CD8-positive, alpha-beta T cell (primary cell): ENCODE measurements at regions of chr15 and their contacts with region 1.

Region 1: DNA sequence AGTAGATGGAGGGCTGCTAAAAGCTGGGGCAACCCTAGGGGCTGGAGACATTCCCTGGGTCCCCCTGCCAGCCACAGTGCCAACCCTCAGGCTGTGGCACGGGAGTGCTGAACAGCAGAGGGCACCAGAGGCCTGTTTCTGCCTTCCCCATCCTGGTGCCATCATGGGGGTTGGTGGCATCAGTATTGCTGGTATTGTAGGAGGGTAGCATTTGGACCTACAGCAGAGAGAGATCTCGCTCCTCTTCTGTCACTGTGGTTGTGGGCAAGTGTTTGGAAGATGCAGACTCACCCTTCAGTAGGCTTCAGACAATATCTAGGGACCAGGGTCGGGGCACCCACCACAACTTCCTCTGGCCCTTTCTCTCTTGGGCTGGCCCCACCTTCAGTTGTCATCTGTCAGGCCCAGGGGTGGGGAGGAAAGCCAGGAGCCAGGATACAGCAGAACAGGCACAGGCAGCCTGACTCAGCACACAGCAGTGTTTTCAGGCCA is 123.5 kb downstream of the RPLP1 start:
- DNase-seq: peak; percentile 57 to 86 (median 70)
- ATAC-seq: peak; percentile 82
- H3K4me3 ChIP-seq: no peak overlapping the region
- H3K4me3 Mint-ChIP-seq: no peak overlapping the region
- H3K27ac ChIP-seq: no peak overlapping the region
- H3K27ac Mint-ChIP-seq: no peak overlapping the region
- H3K4me1 ChIP-seq: peaks cover 11% of the 10 kb centered on the region
- H3K4me1 Mint-ChIP-seq: peaks cover 21% of the 10 kb centered on the region
- H3K27me3 ChIP-seq: no peaks in the 10 kb centered on the region
- H3K27me3 Mint-ChIP-seq: no peaks in the 10 kb centered on the region
- CTCF ChIP-seq: peak; percentile 80

Region 2: DNA sequence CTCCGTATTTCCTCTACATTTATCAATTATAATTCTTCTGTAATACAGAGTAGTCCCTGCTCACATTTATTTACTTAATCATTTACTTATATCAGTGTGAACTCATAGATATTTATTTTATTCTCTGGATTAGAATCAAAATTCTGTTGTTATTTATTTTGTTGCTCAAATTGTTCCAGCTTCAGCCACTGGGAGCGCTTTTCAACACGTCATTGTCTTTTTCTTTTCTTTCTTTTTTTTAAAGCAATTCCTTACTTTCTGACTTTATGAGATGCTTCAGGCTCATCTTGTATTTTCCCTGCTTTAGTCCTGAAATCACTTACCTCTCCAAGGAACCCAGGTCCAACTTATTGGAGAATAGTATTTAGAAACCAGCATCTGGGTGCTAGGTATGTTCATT is 362.3 kb before region 1 on chr15:
- CTCF ChIA-PET with region 1: no interaction called
- POLR2A ChIA-PET with region 1: no interaction called
- intact Hi-C with region 1: no loop called
- DNase-seq: no peak
- ATAC-seq: no peak
- H3K4me3 ChIP-seq: no peak overlapping the region
- H3K4me3 Mint-ChIP-seq: no peak overlapping the region
- H3K27ac ChIP-seq: no peak overlapping the region
- H3K27ac Mint-ChIP-seq: no peak overlapping the region
- H3K4me1 ChIP-seq: no peaks in the 10 kb centered on the region
- H3K4me1 Mint-ChIP-seq: peaks cover 7% of the 10 kb centered on the region
- H3K27me3 ChIP-seq: no peaks in the 10 kb centered on the region
- H3K27me3 Mint-ChIP-seq: no peaks in the 10 kb centered on the region
- CTCF ChIP-seq: no peak

Region 3: DNA sequence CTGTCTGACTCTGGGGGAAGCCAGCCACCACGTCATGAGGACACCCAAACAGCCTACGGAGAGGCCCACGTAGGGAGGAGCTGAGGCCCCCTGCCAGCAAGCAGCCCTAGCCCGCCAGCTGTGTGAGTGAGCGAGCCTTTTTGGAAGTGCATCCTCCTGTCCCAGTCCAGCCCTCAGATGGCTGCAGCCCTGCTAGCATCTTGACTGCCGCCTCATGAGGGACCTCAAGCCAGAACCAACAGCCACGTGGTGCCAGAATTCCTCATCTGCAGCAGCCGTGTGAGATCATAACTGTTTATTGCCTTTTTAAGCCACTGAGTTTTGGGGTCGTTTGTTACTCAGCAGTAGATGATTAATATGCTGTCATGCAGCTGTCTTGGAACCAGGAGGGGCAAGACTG is 50.0 kb before region 1 on chr15:
- CTCF ChIA-PET with region 1: no interaction called
- POLR2A ChIA-PET with region 1: no interaction called
- intact Hi-C with region 1: no loop called
- DNase-seq: no peak
- ATAC-seq: no peak
- H3K4me3 ChIP-seq: no peak overlapping the region
- H3K4me3 Mint-ChIP-seq: no peak overlapping the region
- H3K27ac ChIP-seq: no peak overlapping the region
- H3K27ac Mint-ChIP-seq: no peak overlapping the region
- H3K4me1 ChIP-seq: no peaks in the 10 kb centered on the region
- H3K4me1 Mint-ChIP-seq: no peaks in the 10 kb centered on the region
- H3K27me3 ChIP-seq: no peaks in the 10 kb centered on the region
- H3K27me3 Mint-ChIP-seq: no peaks in the 10 kb centered on the region
- CTCF ChIP-seq: no peak

Region 4: GRCh38 chr15:69719527-69720240 is 143.6 kb after region 1 on chr15:
- CTCF ChIA-PET with region 1: interaction called, 5 read pairs
- POLR2A ChIA-PET with region 1: no interaction called
- intact Hi-C with region 1: loop called in 1 of 2 experiments (anchors 5 kb)
- DNase-seq: peak; percentile 50 to 94 (median 72)
- ATAC-seq: peak; percentile 82
- H3K4me3 ChIP-seq: no peak overlapping the region
- H3K4me3 Mint-ChIP-seq: peak overlapping the region; percentile 36
- H3K27ac ChIP-seq: peak overlapping the region; percentile 50 to 78
- H3K27ac Mint-ChIP-seq: peak overlapping the region; percentile 87
- H3K4me1 ChIP-seq: peaks cover 75% of the 10 kb centered on the region
- H3K4me1 Mint-ChIP-seq: peaks cover 91% of the 10 kb centered on the region
- H3K27me3 ChIP-seq: no peaks in the 10 kb centered on the region
- H3K27me3 Mint-ChIP-seq: no peaks in the 10 kb centered on the region
- CTCF ChIP-seq: no peak

Region 5: DNA sequence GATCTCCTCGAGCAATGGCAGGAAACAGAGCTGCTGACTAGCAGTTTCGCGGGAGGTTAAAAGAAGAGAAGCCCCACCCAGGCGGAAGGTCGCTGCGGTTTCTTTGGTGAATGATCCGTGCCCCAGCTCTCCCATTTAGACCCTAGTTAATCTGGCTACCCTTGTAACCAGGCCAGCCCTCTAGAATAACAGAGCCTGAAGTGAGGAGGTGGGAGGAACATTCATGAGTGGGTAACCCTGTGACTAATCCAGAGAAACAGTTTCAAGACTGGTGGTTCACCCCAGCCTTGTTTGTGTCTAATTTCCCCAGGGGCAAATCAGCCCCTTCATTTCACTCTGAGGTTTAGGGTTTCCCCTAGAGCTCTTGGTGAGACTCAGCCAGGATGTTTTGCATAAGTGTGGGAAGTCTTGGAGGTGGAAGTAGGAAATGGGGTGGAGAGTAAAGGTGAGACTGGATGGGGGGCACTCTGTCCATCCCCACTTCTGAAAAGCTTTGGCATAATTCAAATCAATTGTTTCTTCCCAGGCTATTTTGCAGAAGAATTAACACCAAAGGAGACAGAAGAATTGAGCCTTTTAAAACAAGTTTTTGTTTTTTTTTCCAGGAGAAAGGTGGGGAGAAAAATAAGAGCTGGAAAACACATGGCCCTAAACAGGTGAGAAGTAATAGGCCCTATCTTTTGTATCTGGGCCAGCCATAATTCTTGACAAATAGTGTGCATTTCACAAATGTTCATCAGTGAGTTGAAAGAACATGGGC is 179.7 kb after region 1 on chr15:
- CTCF ChIA-PET with region 1: no interaction called
- POLR2A ChIA-PET with region 1: interaction called, 3 read pairs
- intact Hi-C with region 1: loop called in 1 of 2 experiments (anchors 10 kb)
- DNase-seq: peak; percentile 16 to 89 (median 77)
- ATAC-seq: peak; percentile 70
- H3K4me3 ChIP-seq: peak overlapping the region; percentile 4 to 5
- H3K4me3 Mint-ChIP-seq: peak overlapping the region; percentile 58
- H3K27ac ChIP-seq: no peak overlapping the region
- H3K27ac Mint-ChIP-seq: peak overlapping the region; percentile 86
- H3K4me1 ChIP-seq: peaks cover 72% of the 10 kb centered on the region
- H3K4me1 Mint-ChIP-seq: peaks cover 75% of the 10 kb centered on the region
- H3K27me3 ChIP-seq: peaks cover 0 to 3% of the 10 kb centered on the region in 2 experiments
- H3K27me3 Mint-ChIP-seq: peaks cover 7% of the 10 kb centered on the region
- CTCF ChIP-seq: no peak

Region 6: GRCh38 chr15:70210528-70210927 is 634.4 kb after region 1 on chr15:
- CTCF ChIA-PET with region 1: no interaction called
- POLR2A ChIA-PET with region 1: no interaction called
- intact Hi-C with region 1: loop called in 1 of 2 experiments (anchors 1 kb)
- DNase-seq: peak in 2 of 9 experiments; percentile 13 to 22
- ATAC-seq: no peak
- H3K4me3 ChIP-seq: no peak overlapping the region
- H3K4me3 Mint-ChIP-seq: no peak overlapping the region
- H3K27ac ChIP-seq: no peak overlapping the region
- H3K27ac Mint-ChIP-seq: no peak overlapping the region
- H3K4me1 ChIP-seq: no peaks in the 10 kb centered on the region
- H3K4me1 Mint-ChIP-seq: no peaks in the 10 kb centered on the region
- H3K27me3 ChIP-seq: no peaks in the 10 kb centered on the region
- H3K27me3 Mint-ChIP-seq: peaks cover 3% of the 10 kb centered on the region
- CTCF ChIP-seq: no peak

Region 7: GRCh38 chr15:70584838-70585706 is 1009.0 kb after region 1 on chr15:
- CTCF ChIA-PET with region 1: interaction called, 3 read pairs
- POLR2A ChIA-PET with region 1: no interaction called
- intact Hi-C with region 1: loop called in 1 of 2 experiments (anchors 1 kb)
- DNase-seq: peak; percentile 25 to 70 (median 59)
- ATAC-seq: peak; percentile 82
- H3K4me3 ChIP-seq: peak overlapping the region in 1 of 2 experiments; percentile 33
- H3K4me3 Mint-ChIP-seq: peak overlapping the region; percentile 53
- H3K27ac ChIP-seq: no peak overlapping the region
- H3K27ac Mint-ChIP-seq: no peak overlapping the region
- H3K4me1 ChIP-seq: peaks cover 12% of the 10 kb centered on the region
- H3K4me1 Mint-ChIP-seq: peaks cover 10% of the 10 kb centered on the region
- H3K27me3 ChIP-seq: peaks cover 0 to 7% of the 10 kb centered on the region in 2 experiments
- H3K27me3 Mint-ChIP-seq: peaks cover 20% of the 10 kb centered on the region
- CTCF ChIP-seq: peak; percentile 69